ENCODE measurements at regions of chr3 and their contacts with region 1.

Region 1: DNA sequence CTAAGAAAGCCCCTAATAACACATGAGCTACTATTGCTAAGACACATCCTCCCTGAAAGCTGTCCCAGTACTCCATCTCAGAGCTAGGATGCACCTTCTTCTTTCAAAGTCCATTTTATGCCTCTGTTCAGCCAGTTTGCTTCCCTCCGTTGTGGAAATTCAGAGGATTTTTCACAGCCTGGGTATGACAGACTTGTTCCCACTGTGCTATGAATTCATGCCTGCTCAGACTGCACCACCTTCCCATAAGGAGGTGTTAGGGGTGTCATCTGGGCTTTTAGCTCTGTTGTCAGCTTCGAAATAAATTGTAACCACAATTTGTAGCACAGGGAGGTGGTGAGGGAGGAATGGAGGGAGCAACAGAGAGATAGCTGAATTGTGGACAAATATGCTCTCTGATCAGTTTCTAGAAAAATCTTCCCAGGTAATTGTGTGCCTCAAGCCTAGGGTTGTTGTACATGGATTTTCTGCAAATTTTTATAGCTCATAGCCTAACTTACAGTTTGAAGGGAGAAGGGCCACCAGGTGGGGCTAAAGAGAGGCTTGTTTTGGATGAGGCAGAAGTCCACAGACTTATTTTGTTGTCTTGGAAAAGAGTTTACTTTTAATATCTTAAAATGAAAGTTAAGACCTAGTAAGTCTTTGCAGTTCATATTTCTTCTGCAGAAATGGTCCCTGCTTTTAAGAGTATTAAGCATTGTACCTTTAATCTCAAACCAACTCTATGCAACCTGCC is 462.0 kb downstream of the PDCD6IP start:
- DNase-seq: peak; percentile 38 to 74 (median 40)
- ATAC-seq: no peak
- H3K4me3 ChIP-seq: no peak overlapping the region
- H3K27ac ChIP-seq: no peak overlapping the region
- H3K4me1 ChIP-seq: peaks cover 2% of the 10 kb centered on the region
- H3K27me3 ChIP-seq: no peaks in the 10 kb centered on the region

Region 2: DNA sequence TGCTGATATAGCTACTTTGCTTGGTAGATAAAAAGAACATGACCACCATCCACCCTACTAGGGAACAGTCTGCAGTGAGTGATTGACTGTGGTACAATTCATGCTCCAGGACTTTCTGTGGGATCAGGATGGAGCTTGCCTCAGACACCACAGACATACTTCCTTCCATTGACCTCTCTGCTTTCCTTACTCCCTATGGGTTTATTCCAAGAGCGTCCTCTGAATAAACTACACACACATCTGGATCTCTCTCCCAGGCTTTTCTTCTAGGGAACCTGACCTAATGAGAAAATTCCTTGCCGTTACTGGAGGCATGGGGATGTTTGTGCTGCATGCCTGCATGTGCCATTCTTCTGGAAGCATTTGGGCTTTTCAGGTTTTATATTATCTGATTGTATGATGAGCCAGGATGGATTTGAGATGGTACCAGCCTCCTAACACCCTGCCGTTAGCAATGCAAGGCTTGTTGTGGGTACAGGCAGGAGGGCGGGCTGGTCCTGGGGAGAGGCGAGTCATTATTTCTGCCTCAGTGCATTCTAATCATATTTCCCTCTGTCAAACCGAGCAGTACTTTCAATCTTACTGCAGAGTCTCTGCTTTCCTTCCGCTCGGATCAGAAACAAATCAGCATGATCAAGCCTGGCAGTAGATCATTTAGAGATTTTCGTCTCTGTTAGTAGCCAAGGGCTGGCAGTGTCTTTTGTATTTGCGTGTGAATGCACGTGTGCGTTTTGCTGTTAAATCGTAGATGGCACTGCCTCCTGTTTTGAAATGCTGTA is 182.8 kb before region 1 on chr3:
- intact Hi-C with region 1: no loop called
- DNase-seq: no peak
- ATAC-seq: no peak
- H3K4me3 ChIP-seq: no peak overlapping the region
- H3K27ac ChIP-seq: no peak overlapping the region
- H3K4me1 ChIP-seq: no peaks in the 10 kb centered on the region
- H3K27me3 ChIP-seq: no peaks in the 10 kb centered on the region

Region 3: GRCh38 chr3:34419801-34420200 is 159.4 kb after region 1 on chr3:
- intact Hi-C with region 1: no loop called
- DNase-seq: no peak
- ATAC-seq: no peak
- H3K4me3 ChIP-seq: no peak overlapping the region
- H3K27ac ChIP-seq: no peak overlapping the region
- H3K4me1 ChIP-seq: no peaks in the 10 kb centered on the region
- H3K27me3 ChIP-seq: no peaks in the 10 kb centered on the region

Region 4: GRCh38 chr3:34678575-34678974 is 418.1 kb after region 1 on chr3:
- intact Hi-C with region 1: loop called (anchors 2 to 10 kb)
- DNase-seq: no peak
- ATAC-seq: no peak
- H3K4me3 ChIP-seq: no peak overlapping the region
- H3K27ac ChIP-seq: no peak overlapping the region
- H3K4me1 ChIP-seq: no peaks in the 10 kb centered on the region
- H3K27me3 ChIP-seq: no peaks in the 10 kb centered on the region

Measured in right cardiac atrium (tissue), 5 donors.